GM18951 (cell line): ENCODE measurements at regions of chr1 and their contacts with region 1.

Region 1: GRCh38 chr1:178498896-178499675 is 2.3 kb upstream of the CLEC20A start:
- POLR2A ChIP-seq: no peak

Region 2: DNA sequence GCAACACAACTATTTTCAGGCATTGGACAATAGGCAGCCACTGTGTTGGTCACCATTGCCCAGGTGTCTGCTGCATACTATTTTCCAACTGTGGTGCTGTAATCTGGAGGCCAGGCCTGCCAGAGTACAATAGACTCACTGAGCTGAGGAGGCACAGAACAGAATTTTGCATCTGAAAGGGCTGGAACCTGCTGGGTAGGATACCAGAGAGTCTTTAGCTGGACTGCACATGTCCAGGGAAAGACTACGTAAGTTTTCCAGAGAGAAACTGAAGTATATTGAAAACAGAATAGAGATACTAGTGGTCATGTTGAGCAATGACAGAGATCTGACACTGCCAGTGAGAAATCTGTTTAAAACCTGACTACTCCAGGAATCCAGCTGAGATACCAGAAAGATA is 204.4 kb before region 1 on chr1:
- in situ Hi-C with region 1: loop called (anchors 10 kb)
- POLR2A ChIP-seq: no peak

Region 3: GRCh38 chr1:178371235-178371634 is 127.9 kb before region 1 on chr1:
- in situ Hi-C with region 1: no loop called
- POLR2A ChIP-seq: no peak